T-cell (primary cell): ENCODE measurements at regions of chr4 and their contacts with region 1.

Region 1: GRCh38 chr4:27397886-27398285 is 537.2 kb downstream of the STIM2 start:
- DNase-seq: no peak
- ATAC-seq: no peak
- H3K4me3 ChIP-seq: no peak overlapping the region
- H3K4me3 Mint-ChIP-seq: no peak overlapping the region
- H3K27ac ChIP-seq: no peak overlapping the region
- H3K27ac Mint-ChIP-seq: no peak overlapping the region
- H3K4me1 ChIP-seq: no peaks in the 10 kb centered on the region
- H3K4me1 Mint-ChIP-seq: no peaks in the 10 kb centered on the region
- H3K27me3 ChIP-seq: no peaks in the 10 kb centered on the region
- H3K27me3 Mint-ChIP-seq: peaks cover 0 to 2% of the 10 kb centered on the region in 2 donors

Region 2: GRCh38 chr4:27414853-27415252 is 17.0 kb after region 1 on chr4:
- CTCF ChIA-PET with region 1: no interaction called
- POLR2A ChIA-PET with region 1: interaction called in 1 of 2 experiments, 12 read pairs
- DNase-seq: no peak
- ATAC-seq: no peak
- H3K4me3 ChIP-seq: no peak overlapping the region
- H3K4me3 Mint-ChIP-seq: no peak overlapping the region
- H3K27ac ChIP-seq: no peak overlapping the region
- H3K27ac Mint-ChIP-seq: no peak overlapping the region
- H3K4me1 ChIP-seq: no peaks in the 10 kb centered on the region
- H3K4me1 Mint-ChIP-seq: no peaks in the 10 kb centered on the region
- H3K27me3 ChIP-seq: no peaks in the 10 kb centered on the region
- H3K27me3 Mint-ChIP-seq: no peaks in the 10 kb centered on the region

Region 3: DNA sequence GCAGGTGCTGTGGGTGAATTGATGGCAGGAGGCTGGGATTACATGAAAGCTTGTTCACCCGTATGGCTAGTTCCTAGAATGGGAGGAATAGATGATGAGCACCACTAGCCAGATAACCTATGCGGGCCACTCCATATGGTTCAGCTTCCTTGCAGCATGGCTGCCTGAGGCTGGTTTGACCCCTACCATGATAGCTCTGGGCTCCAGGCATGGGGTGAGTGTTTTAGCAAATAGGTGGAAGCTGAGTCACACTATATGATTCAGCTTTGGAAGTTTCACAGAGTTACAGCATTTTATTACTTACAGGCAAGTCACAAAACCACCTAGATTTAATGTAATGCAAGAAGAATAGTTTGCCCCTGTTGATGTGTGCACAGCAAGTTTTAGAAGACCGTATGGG is 65.9 kb after region 1 on chr4:
- CTCF ChIA-PET with region 1: no interaction called
- POLR2A ChIA-PET with region 1: no interaction called
- DNase-seq: no peak
- ATAC-seq: no peak
- H3K4me3 ChIP-seq: no peak overlapping the region
- H3K4me3 Mint-ChIP-seq: no peak overlapping the region
- H3K27ac ChIP-seq: no peak overlapping the region
- H3K27ac Mint-ChIP-seq: no peak overlapping the region
- H3K4me1 ChIP-seq: no peaks in the 10 kb centered on the region
- H3K4me1 Mint-ChIP-seq: no peaks in the 10 kb centered on the region
- H3K27me3 ChIP-seq: no peaks in the 10 kb centered on the region
- H3K27me3 Mint-ChIP-seq: no peaks in the 10 kb centered on the region